GM13977 (cell line): ENCODE measurements at regions of chr16 and their contacts with region 1.

Region 1: DNA sequence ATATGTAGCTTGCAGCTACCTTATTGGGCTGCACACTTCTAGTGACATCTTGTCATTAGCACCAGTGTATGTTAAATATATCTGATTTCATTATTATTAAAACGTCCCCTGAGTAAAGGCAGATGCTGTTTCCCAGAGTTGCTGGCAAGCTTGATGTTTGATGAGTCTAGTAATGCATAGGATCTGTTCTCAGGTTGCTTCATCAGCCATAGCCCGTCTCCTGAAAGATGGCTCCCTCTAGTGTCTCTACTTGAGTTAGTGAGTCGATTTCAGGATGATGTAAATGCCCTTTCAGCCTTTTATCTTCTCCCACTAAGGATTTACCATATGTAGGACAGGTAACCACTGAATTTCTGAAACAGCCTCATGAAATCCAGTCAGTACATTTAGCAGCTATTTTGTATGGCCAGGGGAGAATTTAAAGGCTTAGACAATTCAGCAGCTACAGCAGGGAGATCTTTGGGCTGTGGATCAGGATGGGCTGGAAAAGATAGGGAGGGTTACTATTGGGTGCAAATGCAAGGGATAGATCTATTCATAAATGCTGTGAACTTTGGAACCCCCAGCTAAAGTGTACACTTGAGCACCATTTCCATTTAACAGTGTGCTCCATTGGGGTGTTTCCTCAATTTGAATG is 376.3 kb downstream of the CNTNAP4 start:
- DNase-seq: peak; percentile 31
- CTCF ChIP-seq: peak; percentile 66

Region 2: GRCh38 chr16:75789237-75789636 is 864.3 kb before region 1 on chr16:
- in situ Hi-C with region 1: loop called (anchors 25 kb)
- DNase-seq: peak; percentile 61
- CTCF ChIP-seq: peak; percentile 75

Region 3: DNA sequence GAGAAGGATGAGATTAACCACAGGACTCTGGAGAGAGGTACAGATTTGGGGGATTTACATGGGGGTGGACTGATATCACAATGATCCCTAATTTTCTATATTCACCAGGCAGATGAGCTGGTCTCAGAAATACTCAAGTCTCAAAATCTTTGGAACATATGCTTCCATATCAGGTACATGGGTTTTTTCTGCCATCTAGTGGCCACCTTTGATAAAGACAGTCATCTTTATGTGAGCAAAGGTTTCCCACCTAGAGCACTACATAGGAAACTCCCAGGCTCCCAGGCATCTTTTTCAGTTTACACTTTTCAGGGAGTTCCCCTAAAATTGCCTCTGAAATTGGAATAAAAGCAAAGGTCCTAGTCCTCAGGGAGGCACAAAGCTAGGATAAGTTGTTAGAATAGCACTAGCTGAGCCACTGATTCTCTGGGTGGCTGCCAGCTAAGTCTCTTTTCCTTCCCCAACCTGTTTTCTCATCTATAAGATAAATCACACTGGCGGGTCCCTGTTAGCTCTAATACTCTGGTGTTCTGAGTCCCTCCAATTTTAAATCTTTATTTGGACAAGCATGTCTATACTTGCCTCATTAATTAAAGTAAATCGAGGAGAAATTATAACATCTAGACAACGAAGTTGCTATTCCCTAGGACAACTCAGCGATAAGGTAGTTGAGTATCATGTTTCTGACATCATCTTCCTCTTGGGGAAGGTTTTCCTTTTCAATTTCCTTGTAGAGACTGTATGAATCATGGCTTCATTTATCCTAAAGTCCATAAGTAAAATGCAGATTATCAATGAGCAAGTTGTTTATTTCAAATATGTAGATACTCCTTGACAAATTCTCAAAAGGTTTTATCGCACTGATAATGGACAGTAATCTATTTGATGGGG is 518.5 kb after region 1 on chr16:
- in situ Hi-C with region 1: loop called (anchors 25 kb)
- DNase-seq: peak; percentile 41
- CTCF ChIP-seq: peak; percentile 68